Heart right ventricle (tissue), 16 donors: ENCODE measurements at regions of chr3 and their contacts with region 1.

Region 1: DNA sequence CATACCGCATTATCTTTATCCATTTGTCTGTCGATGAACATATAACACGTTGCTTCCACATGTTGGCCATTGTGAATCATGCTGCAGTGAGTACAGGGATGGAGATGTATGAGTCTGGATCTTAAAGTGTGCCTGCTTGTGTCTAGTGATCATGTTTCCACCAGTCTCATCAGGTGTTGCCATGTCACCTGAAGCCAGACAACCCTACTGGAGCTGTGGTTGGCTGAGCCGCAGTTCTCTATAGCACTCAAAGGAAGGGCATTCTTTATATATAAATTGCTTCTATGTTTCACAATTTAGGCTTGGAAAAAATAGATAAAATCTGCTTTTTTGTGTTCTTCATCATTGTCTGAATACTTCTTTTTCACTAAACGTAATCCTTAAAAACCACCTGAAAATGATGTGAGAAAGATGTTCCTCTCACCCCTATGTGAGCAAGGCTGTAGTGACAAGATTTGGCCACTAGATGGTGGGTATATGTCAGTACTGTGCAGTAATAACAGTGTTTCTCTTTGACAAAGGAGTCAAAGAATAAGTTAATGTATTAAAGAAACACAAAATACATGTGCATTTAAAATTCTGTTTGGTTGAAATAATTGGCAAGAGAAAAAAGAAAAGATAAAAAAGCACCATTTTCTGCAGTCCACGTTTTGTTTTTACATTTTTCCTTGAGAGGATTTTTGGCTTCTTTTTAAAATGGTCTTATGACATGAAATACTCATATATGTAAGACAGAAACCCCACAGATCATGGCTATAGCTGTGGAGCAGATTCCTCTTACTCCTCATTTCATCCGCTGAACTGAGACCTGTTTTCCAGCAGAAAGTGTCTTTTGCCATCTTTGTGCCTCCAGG is 394.5 kb upstream of the DPPA4 start:
- DNase-seq: peak in 1 of 2 donors; percentile 31
- ATAC-seq: peak in 4 of 8 donors; percentile 60 to 80 (median 74)
- H3K4me3 ChIP-seq: no peak overlapping the region
- H3K27ac ChIP-seq: no peak overlapping the region
- H3K4me1 ChIP-seq: no peaks in the 10 kb centered on the region
- H3K27me3 ChIP-seq: no peaks in the 10 kb centered on the region
- CTCF ChIP-seq: peak; percentile 38 to 90 (median 78)

Region 2: GRCh38 chr3:110314512-110315114 is 582.8 kb after region 1 on chr3:
- intact Hi-C with region 1: loop called in 7 of 10 experiments (anchors 5 kb)
- DNase-seq: peak in 1 of 2 donors; percentile 35
- ATAC-seq: peak in 2 of 8 donors; percentile 34 to 73
- H3K4me3 ChIP-seq: no peak overlapping the region
- H3K27ac ChIP-seq: no peak overlapping the region
- H3K4me1 ChIP-seq: peaks cover 0 to 5% (median 0%) of the 10 kb centered on the region in 9 donors
- H3K27me3 ChIP-seq: no peaks in the 10 kb centered on the region
- CTCF ChIP-seq: peak; percentile 51 to 78 (median 71)

Region 3: GRCh38 chr3:111051354-111051753 is 1319.5 kb after region 1 on chr3:
- intact Hi-C with region 1: loop called in 1 of 10 experiments (anchors 10 kb)
- DNase-seq: no peak
- ATAC-seq: no peak
- H3K4me3 ChIP-seq: no peak overlapping the region
- H3K27ac ChIP-seq: no peak overlapping the region
- H3K4me1 ChIP-seq: no peaks in the 10 kb centered on the region
- H3K27me3 ChIP-seq: no peaks in the 10 kb centered on the region
- CTCF ChIP-seq: no peak

Region 4: GRCh38 chr3:111071257-111072015 is 1339.6 kb after region 1 on chr3 and contains the start of gene NECTIN3:
- intact Hi-C with region 1: loop called in 2 of 10 experiments (anchors 10 kb)
- DNase-seq: peak; percentile 94
- ATAC-seq: peak; percentile 93 to 96 (median 95)
- H3K4me3 ChIP-seq: peak within 1 kb of the TSS; percentile 71 to 94 (median 82)
- H3K27ac ChIP-seq: peak within 1 kb of the TSS; percentile 79 to 91 (median 86)
- H3K4me1 ChIP-seq: peaks cover 0 to 29% (median 18%) of the 10 kb centered on the region in 9 donors
- H3K27me3 ChIP-seq: peaks cover 0 to 49% (median 0%) of the 10 kb centered on the region in 7 donors
- CTCF ChIP-seq: no peak
- total RNA-seq, gene NECTIN3: 4.9 to 11.5 (median 9.0) TPM

Region 5: GRCh38 chr3:111080413-111080812 is 1348.6 kb after region 1 on chr3:
- intact Hi-C with region 1: loop called in 4 of 10 experiments (anchors 10 kb)
- DNase-seq: no peak
- ATAC-seq: no peak
- H3K4me3 ChIP-seq: no peak overlapping the region
- H3K27ac ChIP-seq: no peak overlapping the region
- H3K4me1 ChIP-seq: peaks cover 0 to 12% (median 0%) of the 10 kb centered on the region in 9 donors
- H3K27me3 ChIP-seq: no peaks in the 10 kb centered on the region
- CTCF ChIP-seq: peak in 8 of 9 donors; percentile 27 to 75 (median 57)

Region 6: DNA sequence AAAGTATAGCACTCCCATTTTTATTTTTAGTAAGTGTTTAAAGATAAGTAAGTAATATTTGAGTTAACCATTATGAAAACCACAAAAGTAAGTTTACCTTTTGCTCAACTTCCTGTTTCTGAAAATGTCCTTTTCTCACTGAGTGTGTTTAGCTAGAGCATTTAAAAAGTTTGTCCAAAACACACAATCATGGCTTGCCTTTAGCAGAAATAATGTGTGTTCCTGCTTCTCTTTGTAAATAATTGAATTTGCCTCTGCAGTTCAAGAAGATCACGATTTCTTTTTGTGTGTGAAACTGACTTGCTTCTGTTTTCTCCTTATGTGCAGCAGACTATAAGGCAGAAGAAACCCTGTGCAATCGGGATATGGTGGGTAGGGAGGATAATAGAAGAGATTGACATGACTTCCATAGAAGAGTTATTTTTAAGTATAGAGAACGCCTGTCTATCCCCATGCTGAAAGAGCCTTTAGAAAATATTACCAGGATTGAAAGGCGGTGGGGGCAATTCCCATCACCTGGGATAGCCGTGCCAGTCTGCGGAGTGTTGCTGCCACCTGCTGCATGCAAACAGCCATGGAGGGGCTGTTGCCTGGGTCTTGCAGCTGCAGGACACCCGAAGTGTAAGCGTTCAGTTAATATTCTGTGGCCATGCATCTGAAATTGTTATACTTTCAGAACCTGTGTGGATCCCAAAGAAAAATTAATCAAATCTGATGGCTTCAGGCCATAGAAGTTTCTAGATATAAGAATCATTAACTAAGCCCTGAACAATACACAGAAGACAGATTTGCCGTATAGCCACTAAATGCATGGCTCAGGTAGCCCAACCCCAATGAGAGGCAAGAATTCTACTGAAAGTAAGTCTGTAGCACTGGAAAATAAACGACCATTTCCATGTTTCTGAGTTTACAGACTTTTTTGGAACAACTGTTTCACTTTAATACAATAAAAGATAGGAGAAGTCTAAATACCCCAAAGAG is 1807.8 kb after region 1 on chr3:
- intact Hi-C with region 1: loop called in 1 of 10 experiments (anchors 5 kb)
- DNase-seq: peak; percentile 11 to 16
- ATAC-seq: peak in 3 of 8 donors; percentile 53 to 66 (median 58)
- H3K4me3 ChIP-seq: no peak overlapping the region
- H3K27ac ChIP-seq: no peak overlapping the region
- H3K4me1 ChIP-seq: peaks cover 0 to 22% (median 0%) of the 10 kb centered on the region in 9 donors
- H3K27me3 ChIP-seq: peaks cover 0 to 9% (median 3%) of the 10 kb centered on the region in 7 donors
- CTCF ChIP-seq: peak in 8 of 9 donors; percentile 10 to 61 (median 48)